Posterior vena cava (tissue), 2 donors: ENCODE measurements at regions of chr3 and their contacts with region 1.

Region 1: DNA sequence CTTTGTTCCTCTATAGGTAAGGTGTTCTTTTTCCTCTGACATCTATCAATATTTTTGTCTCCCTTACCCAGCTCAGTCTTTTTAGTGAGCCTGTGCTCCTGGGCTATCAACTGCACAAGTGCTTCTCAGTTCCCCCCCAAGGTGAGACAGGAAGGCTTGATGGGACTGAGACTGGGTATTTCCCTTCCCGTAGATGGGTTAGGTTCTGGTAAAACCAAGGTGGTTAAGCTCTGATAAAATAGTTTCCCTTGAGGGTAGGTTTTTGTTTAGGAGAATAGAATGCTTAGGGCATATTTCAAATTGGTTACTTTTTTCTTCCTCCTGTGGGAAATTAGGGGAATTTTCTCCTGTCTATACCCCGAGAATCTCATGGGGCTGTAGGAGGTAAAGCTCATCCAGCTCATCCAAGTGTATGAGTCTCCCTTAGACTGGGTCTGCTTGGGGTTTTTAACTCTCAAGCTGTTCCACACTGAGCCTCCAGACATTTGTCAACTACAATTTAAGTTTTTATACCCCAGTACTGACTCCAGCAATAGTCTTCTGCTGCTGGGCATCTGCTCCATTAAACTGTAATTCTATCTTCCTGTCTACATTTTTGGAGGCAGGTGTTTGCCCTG is 44.9 kb downstream of the OXSR1 start:
- DNase-seq: no peak

Region 2: DNA sequence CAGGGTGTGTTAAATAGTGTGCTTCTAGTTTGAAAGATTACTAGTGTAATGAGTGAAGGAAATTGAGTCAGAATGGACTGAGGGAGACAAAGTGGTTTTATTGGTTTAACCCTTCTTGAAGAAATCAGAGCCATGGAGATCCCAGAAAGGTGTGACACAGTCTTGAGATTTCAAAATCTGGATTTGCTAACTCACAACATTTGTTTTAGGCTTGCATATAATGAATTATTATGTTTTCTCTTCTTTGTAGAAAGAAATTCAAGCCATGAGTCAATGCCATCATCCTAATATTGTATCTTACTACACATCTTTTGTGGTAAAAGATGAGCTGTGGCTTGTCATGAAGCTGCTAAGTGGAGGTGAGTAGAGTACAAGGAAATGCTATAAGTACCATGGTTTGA is 19.8 kb before region 1 on chr3:
- intact Hi-C with region 1: loop called in 1 of 2 experiments (anchors 1 kb)
- DNase-seq: no peak